Esophagus squamous epithelium (tissue), 5 donors: ENCODE measurements at regions of chr7 and their contacts with region 1.

Region 1: GRCh38 chr7:148962823-148963582 is 65.3 kb downstream of the PDIA4 start:
- DNase-seq: no peak
- H3K4me3 ChIP-seq: peak overlapping the region; percentile 35 to 72 (median 62)
- H3K27ac ChIP-seq: peak overlapping the region; percentile 62 to 84 (median 74)
- H3K4me1 ChIP-seq: peaks cover 4 to 36% (median 10%) of the 10 kb centered on the region in 3 donors
- H3K27me3 ChIP-seq: no peaks in the 10 kb centered on the region
- CTCF ChIP-seq: peak; percentile 33 to 72 (median 66)
- POLR2A ChIP-seq: no peak

Region 2: GRCh38 chr7:148507787-148508186 is 455.2 kb before region 1 on chr7:
- intact Hi-C with region 1: loop called (anchors 5 kb)
- DNase-seq: no peak
- H3K4me3 ChIP-seq: no peak overlapping the region
- H3K27ac ChIP-seq: no peak overlapping the region
- H3K4me1 ChIP-seq: no peaks in the 10 kb centered on the region
- H3K27me3 ChIP-seq: peaks cover 0 to 3% (median 0%) of the 10 kb centered on the region in 4 donors
- CTCF ChIP-seq: no peak
- POLR2A ChIP-seq: no peak

Region 3: DNA sequence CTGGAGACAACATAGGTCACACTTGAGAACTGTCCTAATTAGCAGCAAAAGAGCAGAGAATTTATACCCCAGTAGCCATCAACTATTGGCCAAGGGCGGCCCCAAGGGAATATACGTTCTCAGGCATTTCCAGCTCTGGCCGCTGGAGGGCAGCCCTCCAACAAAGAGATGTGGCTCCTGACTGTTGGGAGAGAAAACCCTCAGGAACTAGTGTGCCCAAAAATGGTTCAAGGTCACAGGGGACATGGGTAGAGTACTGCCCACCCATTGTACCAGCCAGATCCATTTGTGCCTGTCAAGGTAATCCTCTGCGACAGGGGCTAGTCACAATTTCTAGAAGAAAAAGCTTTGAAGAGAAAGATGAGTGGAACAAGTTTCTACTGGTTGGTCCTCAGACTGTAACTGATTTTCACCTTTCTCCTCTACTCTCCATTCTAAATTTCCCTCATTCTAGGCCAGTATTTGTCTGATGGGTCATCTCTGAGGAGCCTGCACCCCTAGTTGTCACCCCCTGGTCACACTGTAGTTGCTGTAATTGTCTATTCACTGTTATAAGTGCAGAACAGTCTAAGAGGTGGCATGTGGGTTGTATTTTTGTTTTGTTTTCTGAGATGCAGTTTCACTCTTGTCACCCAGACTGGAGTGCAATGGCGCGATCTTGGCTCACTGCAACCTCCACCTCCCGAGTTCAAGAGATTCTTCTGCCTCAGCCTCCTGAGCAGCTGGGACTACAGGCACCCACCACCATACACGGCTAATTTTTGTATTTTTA is 387.2 kb before region 1 on chr7:
- intact Hi-C with region 1: loop called (anchors 10 kb)
- DNase-seq: no peak
- H3K4me3 ChIP-seq: no peak overlapping the region
- H3K27ac ChIP-seq: no peak overlapping the region
- H3K4me1 ChIP-seq: no peaks in the 10 kb centered on the region
- H3K27me3 ChIP-seq: no peaks in the 10 kb centered on the region
- CTCF ChIP-seq: peak; percentile 62 to 87 (median 73)
- POLR2A ChIP-seq: no peak

Region 4: DNA sequence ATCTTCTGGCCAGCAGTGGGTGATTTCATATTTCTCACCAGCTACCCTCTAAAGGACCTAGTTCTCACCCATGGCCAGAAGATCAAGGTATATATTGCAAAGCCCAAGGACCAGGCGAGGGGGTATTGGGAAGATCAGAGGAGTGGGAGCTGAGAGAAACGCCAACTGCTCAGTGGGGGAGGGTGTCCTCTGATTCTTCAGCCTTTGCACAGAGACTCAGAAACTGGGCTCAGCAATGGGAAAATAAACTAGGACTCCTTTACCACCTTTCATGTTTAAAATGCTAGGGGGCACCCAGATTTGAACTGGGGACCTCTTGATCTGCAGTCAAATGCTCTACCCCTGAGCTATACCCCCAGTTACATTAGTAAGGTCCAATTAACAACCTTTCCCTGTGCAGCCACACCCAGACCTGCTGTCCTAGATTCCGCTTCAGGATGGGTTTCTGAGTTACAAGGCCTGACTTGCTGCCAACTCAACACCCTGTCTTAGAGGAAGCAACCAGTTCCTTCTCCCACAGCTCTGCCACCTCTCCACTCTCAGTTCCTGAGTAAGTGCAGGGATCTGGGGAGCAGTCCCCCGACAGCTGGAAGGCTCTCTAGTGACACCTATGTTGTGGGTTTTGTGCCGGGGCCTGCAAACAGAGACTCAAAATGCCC is 392.5 kb after region 1 on chr7:
- intact Hi-C with region 1: no loop called
- DNase-seq: no peak
- H3K4me3 ChIP-seq: no peak overlapping the region
- H3K27ac ChIP-seq: no peak overlapping the region
- H3K4me1 ChIP-seq: peaks cover 0 to 6% (median 0%) of the 10 kb centered on the region in 3 donors
- H3K27me3 ChIP-seq: no peaks in the 10 kb centered on the region
- CTCF ChIP-seq: no peak
- POLR2A ChIP-seq: no peak